GM13977 (cell line): ENCODE measurements at regions of chr19 and their contacts with region 1.

Region 1: DNA sequence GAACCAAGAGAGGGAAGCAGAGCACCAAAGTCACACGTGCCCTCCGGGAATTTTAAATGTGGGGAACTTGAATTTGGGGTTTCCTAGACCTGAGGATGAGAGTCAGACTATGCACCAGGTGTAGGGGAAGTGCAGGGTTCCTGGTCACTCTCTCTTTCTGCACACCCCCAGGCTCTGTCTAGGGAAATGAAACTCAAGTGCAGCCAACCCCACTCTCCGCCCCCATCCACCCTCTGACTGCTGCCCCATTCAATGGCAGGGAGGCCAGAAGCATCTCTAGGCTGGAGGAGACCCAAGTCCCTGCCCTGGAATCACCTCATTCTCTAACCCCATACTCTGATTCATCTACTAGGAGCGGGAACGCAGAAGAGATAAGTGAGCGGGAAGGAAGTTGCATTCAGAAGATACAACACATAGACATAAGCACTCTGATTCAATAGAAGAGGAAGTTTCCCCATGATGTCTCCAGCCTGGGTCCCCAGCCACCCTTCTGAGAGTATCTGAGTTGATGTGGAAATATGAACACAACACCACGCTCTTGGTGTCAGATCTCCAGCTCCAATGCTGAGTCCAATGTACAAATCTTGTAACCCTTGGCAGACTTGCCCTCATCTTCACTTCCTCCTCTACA is 4.7 kb upstream of the SIGLEC14 start:
- DNase-seq: no peak
- CTCF ChIP-seq: no peak

Region 2: GRCh38 chr19:51473009-51473707 is 178.2 kb before region 1 on chr19:
- in situ Hi-C with region 1: loop called (anchors 10 kb)
- DNase-seq: peak; percentile 80
- CTCF ChIP-seq: peak; percentile 81

Region 3: DNA sequence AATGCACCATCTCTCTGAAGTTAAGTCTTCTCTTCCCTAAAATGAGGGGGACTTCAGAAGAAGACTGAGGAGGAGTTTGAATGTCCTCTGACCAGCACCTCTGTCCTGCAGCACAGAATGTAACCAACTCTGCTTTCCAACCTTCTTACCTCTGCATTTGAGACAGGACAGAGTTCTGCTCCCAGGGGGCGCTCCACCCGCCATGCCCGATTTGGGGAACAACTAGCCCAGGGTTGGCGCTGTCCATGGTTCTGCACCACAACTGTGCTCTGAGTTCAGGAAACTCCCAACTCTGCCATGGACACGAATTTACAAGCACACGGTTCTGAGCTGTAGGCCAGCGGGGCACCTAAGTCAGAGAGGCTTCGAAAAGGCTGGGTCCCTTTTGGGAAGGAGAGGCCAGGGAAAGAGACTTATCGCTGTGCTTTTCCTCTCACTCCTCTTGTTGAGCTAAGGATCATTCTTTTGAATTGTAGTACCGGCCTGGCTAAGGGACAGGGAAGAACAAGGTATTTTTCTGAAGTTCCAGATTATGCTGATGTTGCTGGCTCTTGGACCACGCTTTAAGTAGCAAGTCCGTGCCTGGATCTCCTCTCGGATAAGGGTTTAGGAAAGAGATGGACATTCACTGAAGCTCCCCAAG is 43.3 kb before region 1 on chr19:
- in situ Hi-C with region 1: loop called (anchors 5 kb)
- DNase-seq: no peak
- CTCF ChIP-seq: peak; percentile 60

Region 4: GRCh38 chr19:51971624-51972023 is 320.3 kb after region 1 on chr19:
- in situ Hi-C with region 1: no loop called
- DNase-seq: no peak
- CTCF ChIP-seq: no peak